ENCODE measurements at regions of chr16 and their contacts with region 1.

Region 1: DNA sequence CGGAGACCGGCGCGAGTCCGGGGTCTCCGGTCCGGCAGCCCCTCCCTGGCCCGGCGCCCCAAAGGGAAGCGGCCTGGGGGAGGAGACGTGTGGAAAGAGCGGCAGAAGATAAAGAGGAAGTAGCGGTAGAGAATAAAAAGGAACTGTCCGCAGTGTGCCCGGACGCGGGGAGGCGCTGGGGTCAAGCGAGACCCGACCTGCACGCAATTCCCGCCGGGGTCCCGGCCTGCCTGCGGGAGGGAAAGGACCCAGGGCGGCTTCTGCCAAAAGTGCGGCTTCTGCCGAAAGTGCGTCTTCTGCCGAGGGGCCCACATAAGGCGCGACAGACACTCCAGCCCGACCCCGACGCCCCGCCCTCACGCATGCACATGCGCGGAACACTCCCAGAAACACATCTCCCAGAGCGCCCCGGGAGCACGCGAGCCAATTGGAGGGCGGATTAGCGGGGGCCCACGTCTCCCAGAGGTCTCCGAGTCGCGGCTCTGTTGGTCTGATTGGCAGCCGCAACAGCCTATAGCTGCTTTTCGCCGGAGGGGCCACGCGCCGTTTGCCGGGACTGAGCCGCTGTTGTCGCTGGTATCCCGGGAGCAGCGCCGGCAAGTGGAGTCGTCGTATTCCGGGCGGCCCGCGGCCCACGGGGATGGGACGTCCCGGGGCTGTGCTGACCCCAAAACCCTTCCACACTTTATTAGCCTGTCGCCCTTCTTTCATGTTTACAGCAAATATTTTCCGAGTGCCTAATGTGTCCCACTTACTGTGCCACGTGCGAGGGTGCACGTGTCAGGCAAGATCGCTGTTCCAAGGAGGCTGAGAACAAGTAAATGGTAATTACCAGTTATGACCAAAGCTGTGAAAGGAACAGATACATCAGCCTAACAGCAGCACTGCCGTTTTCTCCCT is 8.0 kb upstream of the MEFV start:
- DNase-seq: peak; percentile 95 to 99
- H3K4me3 ChIP-seq: peak overlapping the region; percentile 84
- H3K27ac ChIP-seq: peak overlapping the region; percentile 75
- H3K4me1 ChIP-seq: no peaks in the 10 kb centered on the region; the same call in 1 of the 2 replicates
- H3K27me3 ChIP-seq: no peaks in the 10 kb centered on the region
- CTCF ChIP-seq: no peak

Region 2: GRCh38 chr16:2720719-2721633 is 543.4 kb before region 1 on chr16:
- CTCF ChIA-PET with region 1: no interaction called
- POLR2A ChIA-PET with region 1: no interaction called
- intact Hi-C with region 1: no loop called
- DNase-seq: peak; percentile 71 to 94
- H3K4me3 ChIP-seq: peak overlapping the region; percentile 64
- H3K27ac ChIP-seq: peak overlapping the region; percentile 72
- H3K4me1 ChIP-seq: peaks cover 34% of the 10 kb centered on the region
- H3K27me3 ChIP-seq: no peaks in the 10 kb centered on the region
- CTCF ChIP-seq: peak; percentile 34; the same call in 1 of the 2 replicates

Region 3: GRCh38 chr16:2992383-2993055 is 271.9 kb before region 1 on chr16:
- CTCF ChIA-PET with region 1: no interaction called
- POLR2A ChIA-PET with region 1: no interaction called
- intact Hi-C with region 1: no loop called
- DNase-seq: peak; percentile 67 to 92
- H3K4me3 ChIP-seq: no peak overlapping the region
- H3K27ac ChIP-seq: no peak overlapping the region
- H3K4me1 ChIP-seq: peaks cover 25% of the 10 kb centered on the region
- H3K27me3 ChIP-seq: no peaks in the 10 kb centered on the region
- CTCF ChIP-seq: no peak

Region 4: DNA sequence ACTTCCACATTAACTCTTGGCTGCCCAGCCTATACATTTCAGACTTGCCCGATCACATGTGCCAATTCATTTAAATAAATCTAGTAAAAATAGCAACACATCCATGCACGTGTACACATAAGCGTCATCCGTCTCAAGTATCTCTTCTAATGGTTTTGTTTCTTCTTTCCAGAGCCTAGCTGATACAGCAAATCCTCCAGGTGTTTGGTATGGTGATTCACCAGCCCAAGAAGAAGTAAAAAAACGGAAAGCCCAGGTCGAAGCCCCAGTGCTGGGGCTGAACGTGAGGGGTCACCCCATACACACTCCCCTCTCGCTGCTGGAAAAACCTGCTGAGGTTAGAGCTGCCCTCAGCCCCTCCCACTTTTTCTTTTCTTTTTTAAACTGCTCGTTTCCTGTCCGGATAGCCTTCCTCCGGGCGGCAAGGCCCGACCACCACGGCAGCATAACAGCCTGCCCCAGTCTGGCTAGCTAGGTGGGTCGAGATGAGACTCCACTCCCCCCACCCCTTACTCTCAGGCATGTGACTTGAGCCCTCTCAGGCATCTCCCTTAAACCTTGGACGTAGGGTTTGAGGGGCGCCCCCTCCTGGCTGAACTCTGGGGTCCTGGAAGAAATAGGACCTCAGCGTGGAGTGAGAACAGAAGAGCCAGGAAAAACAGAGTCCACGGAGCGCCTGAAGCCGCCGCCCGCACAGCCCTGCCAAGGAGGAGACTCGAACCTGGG is 90.3 kb before region 1 on chr16:
- CTCF ChIA-PET with region 1: no interaction called
- POLR2A ChIA-PET with region 1: interaction called, 19 read pairs
- intact Hi-C with region 1: no loop called
- DNase-seq: no peak
- H3K4me3 ChIP-seq: peak overlapping the region; percentile 43; the same call in 1 of the 2 replicates
- H3K27ac ChIP-seq: no peak overlapping the region
- H3K4me1 ChIP-seq: peaks cover 7% of the 10 kb centered on the region
- H3K27me3 ChIP-seq: no peaks in the 10 kb centered on the region
- CTCF ChIP-seq: peak; percentile 68

Region 5: DNA sequence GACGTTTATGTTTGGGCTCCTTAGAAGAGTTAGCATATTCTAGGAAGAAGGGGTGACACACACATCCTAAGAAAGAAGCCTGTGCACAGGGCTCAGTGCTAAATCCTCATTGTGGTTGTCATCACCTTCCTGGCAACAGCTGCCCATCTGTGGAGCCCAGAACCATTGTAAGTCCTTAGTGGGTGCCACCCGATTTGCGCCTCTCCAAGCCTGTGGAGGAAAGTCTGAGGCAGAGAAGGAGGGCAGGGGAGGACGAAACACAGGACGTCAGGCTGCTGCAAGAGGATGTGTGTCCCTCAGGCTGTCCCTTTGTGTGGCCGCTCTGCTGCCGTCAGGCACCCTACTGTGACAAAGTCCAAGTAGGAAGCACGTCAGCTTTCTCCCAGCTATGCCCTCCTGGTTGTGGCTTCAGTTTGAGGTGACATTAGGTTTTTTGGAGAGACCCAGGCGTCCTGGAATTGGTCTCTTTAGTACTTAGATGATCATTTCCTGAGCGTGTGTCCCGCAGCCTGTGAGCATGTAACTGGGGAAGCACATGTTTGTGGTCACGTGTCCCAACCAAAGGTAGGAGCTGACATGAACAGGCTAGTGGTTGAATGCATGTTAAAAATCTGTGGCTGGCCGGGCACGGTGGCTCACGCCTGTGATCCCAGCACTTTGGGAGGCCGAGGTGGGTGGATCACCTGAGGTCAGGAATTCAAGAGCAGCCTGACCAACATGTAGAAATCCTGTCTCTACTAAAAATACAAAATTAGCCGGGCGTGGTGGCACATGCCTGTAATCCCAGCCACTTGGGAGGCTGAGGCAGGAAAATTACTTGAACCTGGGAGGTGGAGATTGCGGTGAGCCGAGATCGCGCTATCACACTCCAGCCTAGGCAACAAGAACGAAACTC is 247.1 kb after region 1 on chr16:
- CTCF ChIA-PET with region 1: no interaction called
- POLR2A ChIA-PET with region 1: no interaction called
- intact Hi-C with region 1: no loop called
- DNase-seq: no peak
- H3K4me3 ChIP-seq: no peak overlapping the region
- H3K27ac ChIP-seq: no peak overlapping the region
- H3K4me1 ChIP-seq: peaks cover 36% of the 10 kb centered on the region
- H3K27me3 ChIP-seq: no peaks in the 10 kb centered on the region
- CTCF ChIP-seq: no peak

Region 6: GRCh38 chr16:3536271-3536731 is 271.9 kb after region 1 on chr16:
- CTCF ChIA-PET with region 1: no interaction called
- POLR2A ChIA-PET with region 1: no interaction called
- intact Hi-C with region 1: no loop called
- DNase-seq: no peak
- H3K4me3 ChIP-seq: no peak overlapping the region
- H3K27ac ChIP-seq: no peak overlapping the region
- H3K4me1 ChIP-seq: no peaks in the 10 kb centered on the region
- H3K27me3 ChIP-seq: no peaks in the 10 kb centered on the region
- CTCF ChIP-seq: no peak

Measured in PC-9 (cell line).